Caco-2 (cell line): ENCODE measurements at regions of chr2 and their contacts with region 1.

Region 1: GRCh38 chr2:120436885-120437603 is 91.1 kb downstream of the INHBB start:
- DNase-seq: peak; percentile 88 to 89
- H3K4me3 ChIP-seq: no peak overlapping the region
- H3K4me3 Mint-ChIP-seq: no peak overlapping the region
- H3K27ac Mint-ChIP-seq: peak overlapping the region; percentile 33
- H3K4me1 ChIP-seq: peaks cover 16% of the 10 kb centered on the region
- H3K4me1 Mint-ChIP-seq: peaks cover 33% of the 10 kb centered on the region
- H3K27me3 ChIP-seq: no peaks in the 10 kb centered on the region
- H3K27me3 Mint-ChIP-seq: no peaks in the 10 kb centered on the region
- CTCF ChIP-seq: peak; percentile 82 to 89

Region 2: DNA sequence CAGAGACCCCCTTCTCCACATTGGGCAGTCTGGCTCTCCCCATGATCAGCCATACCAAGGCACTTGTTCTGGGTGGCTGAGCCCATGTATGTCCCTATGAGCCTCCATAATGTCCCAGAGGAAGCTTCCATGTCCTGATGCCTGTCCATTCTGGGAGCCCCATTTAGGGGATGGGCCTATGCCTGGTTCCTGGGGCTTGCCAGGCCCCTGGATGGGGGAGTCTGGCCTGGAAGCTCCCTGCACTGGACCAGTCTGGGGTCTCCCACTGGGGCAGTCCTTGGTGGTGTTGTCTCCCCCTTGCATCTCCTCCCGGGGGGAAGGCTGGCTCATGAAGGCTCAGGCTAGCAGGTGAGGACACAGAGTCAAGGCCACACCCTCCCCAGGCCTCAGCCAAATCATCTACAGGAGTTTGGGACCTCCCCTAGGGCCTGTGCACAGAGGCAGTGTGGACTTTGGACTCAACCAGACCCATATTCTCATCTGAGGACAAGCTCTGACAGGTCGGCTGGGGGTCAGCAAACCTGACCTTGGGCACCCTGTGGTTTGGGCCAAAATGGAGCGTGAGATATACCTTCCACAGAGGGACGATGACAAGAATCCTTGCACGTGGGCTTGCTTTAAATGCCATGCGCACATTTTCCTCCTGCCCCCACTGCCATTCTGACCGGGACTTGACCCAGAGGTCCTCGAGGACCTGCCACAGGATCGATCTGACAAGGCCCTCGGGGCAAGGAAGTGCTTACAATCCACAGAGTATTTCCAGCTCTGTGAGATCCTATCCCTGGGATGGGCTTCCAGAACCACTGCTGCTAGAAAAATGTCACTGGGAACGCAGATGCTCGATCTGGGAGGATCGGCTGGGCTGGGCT is 52.3 kb before region 1 on chr2:
- CTCF ChIA-PET with region 1: interaction called, 4 read pairs
- POLR2A ChIA-PET with region 1: no interaction called
- intact Hi-C with region 1: loop called (anchors 2 kb)
- DNase-seq: peak; percentile 51 to 71
- H3K4me3 ChIP-seq: no peak overlapping the region
- H3K4me3 Mint-ChIP-seq: no peak overlapping the region
- H3K27ac Mint-ChIP-seq: no peak overlapping the region
- H3K4me1 ChIP-seq: peaks cover 22% of the 10 kb centered on the region
- H3K4me1 Mint-ChIP-seq: no peaks in the 10 kb centered on the region
- H3K27me3 ChIP-seq: no peaks in the 10 kb centered on the region
- H3K27me3 Mint-ChIP-seq: no peaks in the 10 kb centered on the region
- CTCF ChIP-seq: no peak

Region 3: GRCh38 chr2:120419073-120419472 is 18.0 kb before region 1 on chr2:
- CTCF ChIA-PET with region 1: no interaction called
- POLR2A ChIA-PET with region 1: no interaction called
- intact Hi-C with region 1: no loop called
- DNase-seq: no peak
- H3K4me3 ChIP-seq: no peak overlapping the region
- H3K4me3 Mint-ChIP-seq: no peak overlapping the region
- H3K27ac Mint-ChIP-seq: no peak overlapping the region
- H3K4me1 ChIP-seq: peaks cover 7% of the 10 kb centered on the region; the same call in 1 of the 2 replicates
- H3K4me1 Mint-ChIP-seq: no peaks in the 10 kb centered on the region
- H3K27me3 ChIP-seq: no peaks in the 10 kb centered on the region
- H3K27me3 Mint-ChIP-seq: no peaks in the 10 kb centered on the region
- CTCF ChIP-seq: no peak

Region 4: DNA sequence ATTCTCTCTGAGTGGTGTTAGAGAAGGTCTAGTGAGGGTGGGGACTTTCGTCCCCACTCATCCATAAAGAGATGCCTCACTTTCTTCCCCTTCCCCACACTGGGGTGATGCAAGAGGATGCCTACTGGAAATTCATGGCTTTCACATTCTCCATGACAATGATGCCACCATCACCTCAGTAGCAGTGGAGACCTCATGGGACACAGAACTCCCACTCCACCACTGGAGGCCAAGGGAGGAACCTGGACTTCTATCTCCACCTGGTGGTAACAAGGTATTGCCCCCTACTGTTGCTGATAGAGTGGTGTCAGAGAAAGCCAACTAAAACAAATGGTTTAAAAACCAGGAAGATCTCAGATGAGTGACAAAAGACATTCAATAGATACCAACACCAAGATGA is 19.8 kb after region 1 on chr2:
- CTCF ChIA-PET with region 1: no interaction called
- POLR2A ChIA-PET with region 1: no interaction called
- intact Hi-C with region 1: loop called (anchors 2 kb)
- DNase-seq: peak in 1 of 2 experiments; percentile 42
- H3K4me3 ChIP-seq: no peak overlapping the region
- H3K4me3 Mint-ChIP-seq: no peak overlapping the region
- H3K27ac Mint-ChIP-seq: no peak overlapping the region
- H3K4me1 ChIP-seq: peaks cover 8% of the 10 kb centered on the region
- H3K4me1 Mint-ChIP-seq: peaks cover 10% of the 10 kb centered on the region
- H3K27me3 ChIP-seq: no peaks in the 10 kb centered on the region
- H3K27me3 Mint-ChIP-seq: no peaks in the 10 kb centered on the region
- CTCF ChIP-seq: peak; percentile 12 to 60

Region 5: DNA sequence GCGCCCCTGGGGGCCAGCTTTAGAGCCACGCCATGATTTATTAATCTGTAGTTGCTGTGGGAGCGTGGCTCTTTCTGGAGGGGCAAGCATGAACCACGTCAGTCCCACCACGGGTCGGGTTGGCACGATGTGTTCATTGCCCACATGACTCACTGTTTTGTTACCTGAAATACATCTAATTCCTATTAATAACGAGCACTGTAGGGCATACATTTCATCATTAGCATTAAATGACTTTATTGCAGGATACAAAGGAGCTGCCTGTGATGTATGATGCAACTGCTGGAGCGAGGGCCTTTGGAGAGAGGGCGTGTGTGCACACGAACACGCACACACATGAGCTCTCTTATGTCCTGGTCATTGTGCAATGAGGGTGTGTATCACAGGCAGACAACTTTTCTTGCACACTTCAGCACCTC is 35.9 kb after region 1 on chr2:
- CTCF ChIA-PET with region 1: no interaction called
- POLR2A ChIA-PET with region 1: no interaction called
- intact Hi-C with region 1: no loop called
- DNase-seq: no peak
- H3K4me3 ChIP-seq: no peak overlapping the region
- H3K4me3 Mint-ChIP-seq: no peak overlapping the region
- H3K27ac Mint-ChIP-seq: no peak overlapping the region
- H3K4me1 ChIP-seq: peaks cover 13% of the 10 kb centered on the region
- H3K4me1 Mint-ChIP-seq: peaks cover 7% of the 10 kb centered on the region
- H3K27me3 ChIP-seq: no peaks in the 10 kb centered on the region
- H3K27me3 Mint-ChIP-seq: no peaks in the 10 kb centered on the region
- CTCF ChIP-seq: no peak